ENCODE measurements at regions of chr1 and their contacts with region 1.

Region 1: DNA sequence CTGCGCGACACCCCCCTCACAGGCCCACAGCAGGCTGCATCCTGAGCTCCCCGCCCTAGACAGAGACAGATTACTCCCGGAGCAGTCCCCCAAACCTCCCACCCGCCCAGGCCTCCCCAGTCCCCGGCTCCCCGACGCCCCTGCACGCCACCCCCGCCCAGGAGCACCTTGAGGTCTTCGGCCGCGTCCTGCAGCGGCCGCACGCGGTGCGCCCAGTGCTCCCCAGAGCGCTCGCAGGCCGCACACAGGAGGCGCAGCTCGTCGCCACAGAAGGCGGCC is 709 bp downstream of the TRIM11 start:
- DNase-seq: no peak
- H3K4me3 ChIP-seq: peak overlapping the region; percentile 91
- CTCF ChIP-seq: no peak

Region 2: DNA sequence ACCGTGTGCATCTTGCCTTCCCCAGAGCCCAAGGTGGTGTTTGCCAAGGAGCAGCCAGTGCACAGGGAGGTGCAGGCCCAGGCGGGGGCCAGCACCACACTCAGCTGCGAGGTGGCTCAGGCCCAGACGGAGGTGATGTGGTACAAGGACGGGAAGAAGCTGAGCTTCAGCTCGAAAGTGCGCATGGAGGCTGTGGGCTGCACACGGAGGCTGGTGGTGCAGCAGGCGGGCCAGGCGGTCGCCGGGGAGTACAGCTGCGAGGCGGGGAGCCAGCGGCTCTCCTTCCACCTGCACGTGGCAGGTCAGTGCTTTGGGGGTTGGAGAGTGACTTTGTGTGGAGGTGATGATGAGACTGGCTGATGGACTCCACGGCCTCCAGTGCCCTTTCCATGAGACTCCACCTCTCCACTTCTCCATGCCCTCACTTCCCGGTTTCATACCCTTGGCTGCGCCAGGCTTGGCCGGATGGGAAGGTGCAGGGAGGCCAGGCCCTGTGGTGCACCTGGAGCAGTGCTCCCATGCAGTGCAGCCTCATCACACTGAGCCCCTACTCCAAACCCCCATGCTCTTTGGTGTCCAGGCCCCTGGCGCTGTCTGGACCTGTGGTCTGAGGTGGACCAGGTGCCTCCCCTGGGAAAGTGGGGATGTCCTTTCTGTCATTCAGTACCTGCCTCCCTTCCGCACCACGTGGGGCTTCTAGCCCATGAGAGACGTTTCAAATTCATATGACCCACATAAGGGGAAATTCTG is 149.1 kb before region 1 on chr1:
- CTCF ChIA-PET with region 1: no interaction called
- POLR2A ChIA-PET with region 1: no interaction called
- DNase-seq: no peak
- H3K4me3 ChIP-seq: no peak overlapping the region
- CTCF ChIP-seq: no peak

Region 3: GRCh38 chr1:228393248-228393699 is 12.7 kb before region 1 on chr1:
- CTCF ChIA-PET with region 1: interaction called, 37 read pairs
- POLR2A ChIA-PET with region 1: interaction called, 8 read pairs
- DNase-seq: peak; percentile 37
- H3K4me3 ChIP-seq: no peak overlapping the region
- CTCF ChIP-seq: peak; percentile 75

Measured in AG04449 (cell line).